GM12878 (cell line): ENCODE measurements at regions of chr9 and their contacts with region 1.

Region 1: GRCh38 chr9:111037381-111038305 is 627 bp downstream of the LPAR1 start:
- DNase-seq: no peak
- ATAC-seq: peak; percentile 62
- H3K4me3 ChIP-seq: peak overlapping the region; percentile 53; the same call in 1 of the 2 replicates
- H3K27ac ChIP-seq: no peak overlapping the region
- H3K4me1 ChIP-seq: no peaks in the 10 kb centered on the region
- H3K27me3 ChIP-seq: peaks cover 0 to 10% of the 10 kb centered on the region in 2 experiments; a peak in 1 of 4 replicates
- CTCF ChIP-seq: peak in 2 of 3 experiments; percentile 40 to 54; a peak in 3 of 6 replicates
- EP300 ChIP-seq: no peak
- POLR2A ChIP-seq: no peak
- RAD21 ChIP-seq: peak; percentile 65

Region 2: DNA sequence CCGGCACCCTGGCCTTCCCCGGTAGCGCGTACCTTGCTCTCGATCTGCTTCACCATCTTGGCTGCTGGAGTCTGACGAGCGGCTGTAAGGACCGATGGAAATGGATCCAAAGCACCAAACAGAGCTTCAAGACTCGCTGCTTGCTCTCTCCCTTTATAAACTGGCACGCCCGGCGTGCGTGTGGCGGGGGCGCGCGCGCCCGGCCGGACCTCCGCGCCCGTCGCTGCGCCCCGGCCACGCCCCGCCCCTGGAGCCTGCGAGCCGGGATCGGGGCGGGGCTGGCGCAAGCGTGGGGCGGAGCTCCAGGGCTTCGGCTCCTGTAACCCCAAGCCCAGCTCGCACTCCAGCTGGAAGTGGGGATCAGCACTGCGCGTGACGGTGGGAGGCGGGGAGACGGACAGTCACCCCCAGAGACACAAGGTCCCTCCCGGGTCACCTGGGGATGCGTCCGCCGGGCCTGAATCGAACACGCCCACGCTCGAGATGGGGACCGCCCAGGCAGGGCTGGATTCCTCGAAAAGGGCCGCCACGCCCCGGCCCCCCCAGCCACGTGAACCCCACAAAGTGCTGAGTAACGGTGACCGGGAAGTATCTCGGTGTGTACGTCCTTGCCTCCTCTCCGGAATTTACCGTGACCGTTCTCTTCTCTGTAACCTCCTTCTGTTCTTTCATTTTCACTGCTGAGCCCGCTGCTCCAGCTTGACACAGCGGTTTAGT is 781.1 kb before region 1 on chr9 and contains the start of gene TXN:
- CTCF ChIA-PET with region 1: no interaction called
- POLR2A ChIA-PET with region 1: no interaction called
- RAD21 ChIA-PET with region 1: no interaction called
- SMC1A ChIA-PET with region 1: no interaction called
- in situ Hi-C with region 1: no loop called
- intact Hi-C with region 1: no loop called
- DNase-seq: peak; percentile 87
- ATAC-seq: peak; percentile 69
- H3K4me3 ChIP-seq: peak within 1 kb of the TSS; percentile 92
- H3K27ac ChIP-seq: peak within 1 kb of the TSS; percentile 91
- H3K4me1 ChIP-seq: peaks cover 24% of the 10 kb centered on the region
- H3K27me3 ChIP-seq: no peaks in the 10 kb centered on the region
- CTCF ChIP-seq: no peak
- EP300 ChIP-seq: peak; percentile 41 to 47; a peak in 1 of 4 replicates
- POLR2A ChIP-seq: peak; percentile 99
- RAD21 ChIP-seq: no peak
- polyA plus RNA-seq, gene TXN: 2,263 to 2,304 TPM

Region 3: DNA sequence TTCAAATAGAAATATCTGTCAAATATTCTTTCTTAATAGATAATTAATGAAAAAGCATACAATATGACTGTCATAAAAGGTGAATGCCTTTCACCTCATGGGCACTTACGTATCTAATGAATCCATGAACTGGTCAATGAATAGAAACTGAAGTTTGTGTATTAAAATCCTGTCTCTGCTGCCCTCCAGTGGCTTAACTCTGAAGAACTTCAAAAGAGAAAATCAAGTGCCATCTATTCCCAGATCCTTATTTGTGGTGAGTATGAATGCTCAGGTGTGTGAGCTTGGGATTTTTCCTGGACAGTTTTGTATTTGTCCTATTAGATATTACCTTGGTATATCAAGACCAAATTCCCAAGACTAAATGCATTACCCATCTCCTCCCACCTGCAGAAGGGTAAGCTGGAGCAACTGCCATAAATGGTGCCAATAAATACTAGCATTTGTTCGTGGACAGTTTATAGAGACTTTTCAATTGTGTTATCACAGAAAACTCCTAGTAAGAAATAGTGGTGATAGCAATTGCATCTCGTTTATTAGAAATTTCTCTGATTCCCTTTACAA is 414.1 kb before region 1 on chr9:
- CTCF ChIA-PET with region 1: interaction called, 3 read pairs
- POLR2A ChIA-PET with region 1: no interaction called
- RAD21 ChIA-PET with region 1: interaction called, 10 read pairs
- SMC1A ChIA-PET with region 1: interaction called, 4 read pairs
- in situ Hi-C with region 1: no loop called
- intact Hi-C with region 1: no loop called
- DNase-seq: peak; percentile 28
- ATAC-seq: peak; percentile 38
- H3K4me3 ChIP-seq: no peak overlapping the region
- H3K27ac ChIP-seq: no peak overlapping the region
- H3K4me1 ChIP-seq: peaks cover 6% of the 10 kb centered on the region
- H3K27me3 ChIP-seq: no peaks in the 10 kb centered on the region; a peak in 1 of 4 replicates
- CTCF ChIP-seq: peak; percentile 46 to 74 (median 55); a peak in 5 of 6 replicates
- EP300 ChIP-seq: no peak
- POLR2A ChIP-seq: no peak
- RAD21 ChIP-seq: peak; percentile 76

Region 4: GRCh38 chr9:110880189-110880588 is 157.5 kb before region 1 on chr9:
- CTCF ChIA-PET with region 1: interaction called, 3 read pairs
- POLR2A ChIA-PET with region 1: no interaction called
- RAD21 ChIA-PET with region 1: interaction called, 7 read pairs
- SMC1A ChIA-PET with region 1: interaction called, 19 read pairs
- in situ Hi-C with region 1: no loop called
- intact Hi-C with region 1: loop called (anchors 5 kb)
- DNase-seq: no peak
- ATAC-seq: no peak
- H3K4me3 ChIP-seq: no peak overlapping the region
- H3K27ac ChIP-seq: no peak overlapping the region
- H3K4me1 ChIP-seq: peaks cover 2% of the 10 kb centered on the region; the same call in 1 of the 2 replicates
- H3K27me3 ChIP-seq: no peaks in the 10 kb centered on the region
- CTCF ChIP-seq: no peak
- EP300 ChIP-seq: no peak
- POLR2A ChIP-seq: no peak
- RAD21 ChIP-seq: no peak

Region 5: DNA sequence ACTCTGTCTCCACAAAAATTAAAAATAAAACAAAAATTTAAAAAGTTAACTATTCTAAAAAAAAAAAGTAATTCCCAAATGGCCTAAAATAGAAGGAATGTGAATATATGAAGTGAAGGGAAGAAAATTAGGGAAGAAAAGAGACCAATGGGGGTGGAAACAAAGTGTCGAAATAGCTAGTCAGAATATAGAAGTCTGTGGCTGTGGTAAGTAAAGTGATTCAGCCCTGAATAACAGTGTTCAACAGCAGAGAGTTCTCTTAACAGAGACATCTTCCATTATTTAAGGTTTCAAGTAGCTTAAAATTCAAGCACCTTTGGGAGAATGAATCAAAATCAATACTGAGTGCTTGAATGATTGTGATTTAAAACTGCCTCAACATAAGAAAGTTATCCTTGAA is 51.1 kb before region 1 on chr9:
- CTCF ChIA-PET with region 1: interaction called, 10 read pairs
- POLR2A ChIA-PET with region 1: no interaction called
- RAD21 ChIA-PET with region 1: interaction called, 8 read pairs
- SMC1A ChIA-PET with region 1: interaction called, 12 read pairs
- in situ Hi-C with region 1: no loop called
- intact Hi-C with region 1: no loop called
- DNase-seq: no peak
- ATAC-seq: no peak; the same call in 1 of the 3 replicates
- H3K4me3 ChIP-seq: no peak overlapping the region
- H3K27ac ChIP-seq: no peak overlapping the region
- H3K4me1 ChIP-seq: no peaks in the 10 kb centered on the region
- H3K27me3 ChIP-seq: no peaks in the 10 kb centered on the region
- CTCF ChIP-seq: no peak
- EP300 ChIP-seq: no peak
- POLR2A ChIP-seq: no peak
- RAD21 ChIP-seq: no peak

Region 6: DNA sequence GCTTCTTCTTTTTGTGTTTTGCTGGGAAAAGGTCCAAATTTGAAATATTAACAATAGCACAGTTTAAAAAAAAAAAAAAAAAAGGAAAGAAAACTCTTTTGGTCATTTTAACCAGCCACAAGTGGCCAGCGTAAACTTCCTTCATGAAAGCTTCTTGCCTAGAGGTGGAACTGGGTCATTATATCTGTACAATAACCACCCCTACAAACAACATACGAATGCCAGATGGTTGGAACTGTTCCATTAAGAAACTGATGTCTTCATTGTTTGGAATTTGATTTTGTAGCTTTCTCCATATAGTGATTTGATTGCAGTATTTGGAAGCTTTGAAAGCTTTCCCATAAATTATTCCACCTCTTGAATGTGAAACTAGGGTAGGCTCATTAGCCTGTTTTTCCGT is 18.9 kb after region 1 on chr9:
- CTCF ChIA-PET with region 1: interaction called, 12 read pairs
- POLR2A ChIA-PET with region 1: interaction called, 5 read pairs
- RAD21 ChIA-PET with region 1: interaction called, 56 read pairs
- SMC1A ChIA-PET with region 1: interaction called, 73 read pairs
- in situ Hi-C with region 1: no loop called
- intact Hi-C with region 1: no loop called
- DNase-seq: no peak
- ATAC-seq: no peak
- H3K4me3 ChIP-seq: no peak overlapping the region
- H3K27ac ChIP-seq: no peak overlapping the region
- H3K4me1 ChIP-seq: no peaks in the 10 kb centered on the region
- H3K27me3 ChIP-seq: no peaks in the 10 kb centered on the region
- CTCF ChIP-seq: no peak
- EP300 ChIP-seq: no peak
- POLR2A ChIP-seq: no peak
- RAD21 ChIP-seq: no peak

Region 7: GRCh38 chr9:111149016-111149759 is 111.5 kb after region 1 on chr9:
- CTCF ChIA-PET with region 1: interaction called, 41 read pairs
- POLR2A ChIA-PET with region 1: interaction called, 3 read pairs
- RAD21 ChIA-PET with region 1: interaction called, 51 read pairs
- SMC1A ChIA-PET with region 1: interaction called, 43 read pairs
- in situ Hi-C with region 1: no loop called
- intact Hi-C with region 1: loop called (anchors 2 kb)
- DNase-seq: no peak
- ATAC-seq: peak; percentile 82
- H3K4me3 ChIP-seq: no peak overlapping the region
- H3K27ac ChIP-seq: no peak overlapping the region
- H3K4me1 ChIP-seq: no peaks in the 10 kb centered on the region; the same call in 1 of the 2 replicates
- H3K27me3 ChIP-seq: no peaks in the 10 kb centered on the region
- CTCF ChIP-seq: peak in 2 of 3 experiments; percentile 23 to 40; a peak in 3 of 6 replicates
- EP300 ChIP-seq: no peak
- POLR2A ChIP-seq: no peak
- RAD21 ChIP-seq: peak; percentile 49; the same call in 1 of the 2 replicates

Region 8: GRCh38 chr9:111287127-111287526 is 249.5 kb after region 1 on chr9:
- CTCF ChIA-PET with region 1: interaction called, 6 read pairs
- POLR2A ChIA-PET with region 1: no interaction called
- RAD21 ChIA-PET with region 1: interaction called, 29 read pairs
- SMC1A ChIA-PET with region 1: interaction called, 7 read pairs
- in situ Hi-C with region 1: no loop called
- intact Hi-C with region 1: no loop called
- DNase-seq: no peak
- ATAC-seq: no peak
- H3K4me3 ChIP-seq: no peak overlapping the region
- H3K27ac ChIP-seq: no peak overlapping the region
- H3K4me1 ChIP-seq: no peaks in the 10 kb centered on the region
- H3K27me3 ChIP-seq: no peaks in the 10 kb centered on the region; a peak in 1 of 4 replicates
- CTCF ChIP-seq: no peak
- EP300 ChIP-seq: no peak
- POLR2A ChIP-seq: no peak
- RAD21 ChIP-seq: no peak